Posterior cingulate gyrus (tissue), 11 donors: ENCODE measurements at regions of chr12 and their contacts with region 1.

Region 1: GRCh38 chr12:122078141-122079032 is at the start of gene MLXIP:
- DNase-seq: peak; percentile 91 to 99 (median 93)

Region 2: DNA sequence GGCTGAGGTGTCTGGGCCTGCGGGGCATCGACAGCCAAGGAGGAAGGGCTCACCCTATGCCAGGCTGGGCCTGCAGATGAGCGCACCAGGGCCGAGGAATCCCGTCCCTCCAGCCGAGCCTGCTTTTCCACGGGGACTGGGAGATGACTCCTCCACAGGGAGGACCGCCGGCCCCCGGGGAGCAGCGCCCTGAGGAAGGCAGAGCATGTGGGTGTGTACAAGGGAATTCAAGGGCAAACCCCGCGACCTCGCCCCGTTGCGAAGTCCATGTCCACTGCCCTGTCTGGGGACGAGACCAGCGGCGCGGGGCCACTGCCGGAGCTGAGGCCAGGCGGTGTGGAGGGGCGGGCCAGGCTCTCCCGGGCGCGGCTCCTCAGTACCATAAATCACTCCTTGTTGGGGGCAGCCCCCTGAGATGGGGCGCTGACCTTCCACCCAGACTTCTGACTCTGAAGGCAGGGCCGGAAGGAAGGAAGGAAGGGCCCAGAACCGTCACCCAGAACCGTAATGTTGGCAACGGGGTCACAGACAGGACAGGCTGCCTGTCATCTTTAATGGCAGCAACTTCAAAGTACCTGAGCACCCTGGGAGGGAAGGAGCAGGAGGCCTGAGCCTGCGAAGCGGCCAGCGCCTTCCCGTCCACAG is 625.9 kb before region 1 on chr12:
- intact Hi-C with region 1: no loop called
- DNase-seq: peak in 1 of 10 donors; percentile 78

Region 3: GRCh38 chr12:122097927-122098756 is 19.8 kb after region 1 on chr12:
- intact Hi-C with region 1: loop called (anchors 2 kb)
- DNase-seq: peak; percentile 35 to 96 (median 66)

Region 4: GRCh38 chr12:122116707-122117535 is 38.5 kb after region 1 on chr12:
- intact Hi-C with region 1: loop called (anchors 2 kb)
- DNase-seq: peak; percentile 75 to 98 (median 87)